Gastrocnemius medialis (tissue), 4 donors: ENCODE measurements at regions of chr19 and their contacts with region 1.

Region 1: GRCh38 chr19:17932485-17933338 is at the start of gene CCDC124:
- DNase-seq: peak; percentile 81 to 90
- ATAC-seq: peak; percentile 95 to 96
- H3K4me3 ChIP-seq: peak within 1 kb of the TSS; percentile 73 to 96 (median 88)
- H3K27ac ChIP-seq: peak within 1 kb of the TSS; percentile 88 to 94 (median 90)
- H3K4me1 ChIP-seq: peaks cover 9 to 25% of the 10 kb centered on the region in 2 donors
- H3K27me3 ChIP-seq: no peaks in the 10 kb centered on the region
- CTCF ChIP-seq: peak; percentile 86 to 89 (median 88)
- POLR2A ChIP-seq: peak; percentile 91 to 92
- total RNA-seq, gene CCDC124: 73.1 to 110 (median 81.5) TPM

Region 2: GRCh38 chr19:17215125-17215971 is 717.4 kb before region 1 on chr19 and contains the start of gene USE1:
- in situ Hi-C with region 1: no loop called
- intact Hi-C with region 1: loop called (anchors 10 kb)
- DNase-seq: peak; percentile 86 to 89
- ATAC-seq: peak; percentile 98 to 99
- H3K4me3 ChIP-seq: peak within 1 kb of the TSS; percentile 81 to 88 (median 84)
- H3K27ac ChIP-seq: peak within 1 kb of the TSS; percentile 85 to 91 (median 89)
- H3K4me1 ChIP-seq: peaks cover 9 to 14% of the 10 kb centered on the region in 2 donors
- H3K27me3 ChIP-seq: no peaks in the 10 kb centered on the region
- CTCF ChIP-seq: no peak
- POLR2A ChIP-seq: peak in 1 of 2 donors; percentile 31
- total RNA-seq, gene USE1: 14.1 to 39.9 (median 22.3) TPM

Region 3: DNA sequence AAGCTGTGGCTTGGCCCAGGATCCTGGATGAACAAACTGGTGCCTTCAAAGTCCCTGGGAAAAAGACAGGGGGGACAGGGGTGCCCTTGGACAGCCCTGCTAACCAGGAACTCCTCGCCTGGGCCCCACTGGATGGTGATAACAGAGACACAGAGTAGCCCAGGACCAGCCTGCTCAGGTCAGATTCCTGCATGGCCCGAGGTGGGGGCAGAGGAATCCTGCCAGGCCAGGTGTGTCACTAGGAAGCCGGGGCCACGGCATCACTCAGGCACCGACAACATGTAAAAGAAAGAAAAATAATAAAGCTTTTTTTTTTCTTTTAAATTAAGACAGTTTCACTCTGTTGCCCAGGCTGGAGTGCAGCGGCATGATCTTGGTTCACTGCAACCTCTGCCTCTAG is 78.7 kb before region 1 on chr19:
- in situ Hi-C with region 1: loop called in 2 of 4 experiments (anchors 5 to 10 kb)
- intact Hi-C with region 1: loop called (anchors 1 kb)
- DNase-seq: no peak
- ATAC-seq: no peak
- H3K4me3 ChIP-seq: no peak overlapping the region
- H3K27ac ChIP-seq: no peak overlapping the region
- H3K4me1 ChIP-seq: peaks cover under 1 to 1% of the 10 kb centered on the region in 2 donors
- H3K27me3 ChIP-seq: peaks cover 0 to 3% (median 0%) of the 10 kb centered on the region in 3 donors
- CTCF ChIP-seq: no peak
- POLR2A ChIP-seq: no peak

Region 4: GRCh38 chr19:17859533-17860330 is 73.0 kb before region 1 on chr19 and contains the start of gene RPL18A:
- in situ Hi-C with region 1: loop called in 3 of 4 experiments (anchors 5 to 10 kb)
- intact Hi-C with region 1: loop called (anchors 1 kb)
- DNase-seq: peak; percentile 99
- ATAC-seq: peak; percentile 98 to 99
- H3K4me3 ChIP-seq: peak within 1 kb of the TSS; percentile 91 to 100 (median 94)
- H3K27ac ChIP-seq: peak within 1 kb of the TSS; percentile 87 to 96 (median 94)
- H3K4me1 ChIP-seq: peaks cover 21 to 35% of the 10 kb centered on the region in 2 donors
- H3K27me3 ChIP-seq: no peaks in the 10 kb centered on the region
- CTCF ChIP-seq: peak; percentile 77 to 88 (median 83)
- POLR2A ChIP-seq: peak; percentile 97
- total RNA-seq, gene RPL18A: 1,094 to 1,320 (median 1,226) TPM

Region 5: GRCh38 chr19:18128044-18128443 is 195.3 kb after region 1 on chr19:
- in situ Hi-C with region 1: no loop called
- intact Hi-C with region 1: no loop called
- DNase-seq: no peak
- ATAC-seq: no peak
- H3K4me3 ChIP-seq: no peak overlapping the region
- H3K27ac ChIP-seq: no peak overlapping the region
- H3K4me1 ChIP-seq: no peaks in the 10 kb centered on the region
- H3K27me3 ChIP-seq: no peaks in the 10 kb centered on the region
- CTCF ChIP-seq: no peak
- POLR2A ChIP-seq: no peak